Endothelial cell of umbilical vein (primary cell): ENCODE measurements at regions of chr2 and their contacts with region 1.

Region 1: GRCh38 chr2:176653479-176654443 is 384.5 kb downstream of the MTX2 start:
- DNase-seq: peak; percentile 86
- H3K4me3 ChIP-seq: no peak overlapping the region
- H3K27ac ChIP-seq: no peak overlapping the region
- H3K4me1 ChIP-seq: peaks cover 7% of the 10 kb centered on the region
- H3K27me3 ChIP-seq: peaks cover 0 to 8% of the 10 kb centered on the region in 2 experiments
- CTCF ChIP-seq: peak; percentile 69 to 76
- POLR2A ChIP-seq: no peak

Region 2: GRCh38 chr2:176110975-176111663 is 542.6 kb before region 1 on chr2:
- CTCF ChIA-PET with region 1: interaction called, 22 read pairs
- POLR2A ChIA-PET with region 1: no interaction called
- dilution Hi-C with region 1: no loop called
- intact Hi-C with region 1: loop called (anchors 1 kb)
- DNase-seq: peak; percentile 74
- H3K4me3 ChIP-seq: no peak overlapping the region
- H3K27ac ChIP-seq: no peak overlapping the region
- H3K4me1 ChIP-seq: no peaks in the 10 kb centered on the region
- H3K27me3 ChIP-seq: peaks cover 81 to 96% of the 10 kb centered on the region in 2 experiments
- CTCF ChIP-seq: peak; percentile 87 to 93
- POLR2A ChIP-seq: no peak

Region 3: DNA sequence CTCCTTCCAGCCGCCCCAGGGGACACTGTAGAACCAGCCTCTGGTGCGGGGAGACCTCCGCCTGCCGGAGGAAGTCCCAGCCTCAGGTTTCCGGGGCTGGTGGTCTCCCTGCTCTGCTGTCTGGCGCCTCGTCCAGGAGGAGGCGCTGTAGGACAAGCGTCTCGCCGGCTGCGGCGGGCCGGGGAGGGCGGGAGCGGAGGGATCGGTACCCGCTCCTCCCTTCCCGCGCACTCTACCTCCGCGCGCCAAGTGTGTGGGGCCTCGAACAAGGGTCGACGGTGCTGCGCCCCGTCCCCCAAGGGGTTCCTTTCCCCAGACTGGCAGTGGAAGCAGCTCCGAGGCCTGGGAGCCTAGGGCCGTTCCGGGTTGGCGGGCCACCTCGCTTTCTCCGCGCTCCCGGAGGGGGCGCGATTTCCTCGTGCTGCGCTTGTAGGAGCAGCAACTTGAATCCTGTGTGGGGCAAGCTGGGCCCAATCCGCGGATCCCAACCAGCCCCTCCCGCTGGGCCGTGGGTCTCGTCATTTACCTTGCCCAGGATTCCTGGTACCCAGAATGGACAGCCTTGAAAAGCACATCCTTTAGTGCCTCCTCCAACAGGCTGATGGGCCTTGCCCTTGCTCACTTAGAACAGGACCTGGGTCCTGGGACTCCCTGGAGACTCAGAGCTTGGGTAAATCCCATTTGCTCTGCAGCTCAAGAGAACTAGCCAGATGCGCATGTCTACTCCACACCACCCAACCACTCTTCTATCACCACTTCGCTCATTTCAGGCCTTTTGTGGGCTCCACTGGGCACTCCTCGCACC is 513.0 kb before region 1 on chr2:
- CTCF ChIA-PET with region 1: interaction called, 102 read pairs
- POLR2A ChIA-PET with region 1: interaction called, 5 read pairs
- dilution Hi-C with region 1: loop called (anchors 25 kb)
- intact Hi-C with region 1: loop called (anchors 1 kb)
- DNase-seq: peak; percentile 82
- H3K4me3 ChIP-seq: peak overlapping the region; percentile 16 to 51 (median 39)
- H3K27ac ChIP-seq: peak overlapping the region; percentile 56
- H3K4me1 ChIP-seq: peaks cover 30% of the 10 kb centered on the region
- H3K27me3 ChIP-seq: no peaks in the 10 kb centered on the region
- CTCF ChIP-seq: peak; percentile 80 to 83
- POLR2A ChIP-seq: peak; percentile 58

Region 4: GRCh38 chr2:176643646-176644045 is 10.1 kb before region 1 on chr2:
- CTCF ChIA-PET with region 1: interaction called, 42 read pairs
- POLR2A ChIA-PET with region 1: no interaction called
- dilution Hi-C with region 1: no loop called
- intact Hi-C with region 1: loop called (anchors 1 kb)
- DNase-seq: peak; percentile 39
- H3K4me3 ChIP-seq: no peak overlapping the region
- H3K27ac ChIP-seq: no peak overlapping the region
- H3K4me1 ChIP-seq: peaks cover 10% of the 10 kb centered on the region
- H3K27me3 ChIP-seq: no peaks in the 10 kb centered on the region
- CTCF ChIP-seq: no peak
- POLR2A ChIP-seq: no peak

Region 5: GRCh38 chr2:176814306-176815052 is 160.7 kb after region 1 on chr2:
- CTCF ChIA-PET with region 1: interaction called, 74 read pairs
- POLR2A ChIA-PET with region 1: no interaction called
- dilution Hi-C with region 1: no loop called
- intact Hi-C with region 1: loop called (anchors 1 kb)
- DNase-seq: peak; percentile 38
- H3K4me3 ChIP-seq: no peak overlapping the region
- H3K27ac ChIP-seq: no peak overlapping the region
- H3K4me1 ChIP-seq: no peaks in the 10 kb centered on the region
- H3K27me3 ChIP-seq: peaks cover 0 to 9% of the 10 kb centered on the region in 2 experiments
- CTCF ChIP-seq: peak; percentile 16 to 17
- POLR2A ChIP-seq: no peak

Region 6: DNA sequence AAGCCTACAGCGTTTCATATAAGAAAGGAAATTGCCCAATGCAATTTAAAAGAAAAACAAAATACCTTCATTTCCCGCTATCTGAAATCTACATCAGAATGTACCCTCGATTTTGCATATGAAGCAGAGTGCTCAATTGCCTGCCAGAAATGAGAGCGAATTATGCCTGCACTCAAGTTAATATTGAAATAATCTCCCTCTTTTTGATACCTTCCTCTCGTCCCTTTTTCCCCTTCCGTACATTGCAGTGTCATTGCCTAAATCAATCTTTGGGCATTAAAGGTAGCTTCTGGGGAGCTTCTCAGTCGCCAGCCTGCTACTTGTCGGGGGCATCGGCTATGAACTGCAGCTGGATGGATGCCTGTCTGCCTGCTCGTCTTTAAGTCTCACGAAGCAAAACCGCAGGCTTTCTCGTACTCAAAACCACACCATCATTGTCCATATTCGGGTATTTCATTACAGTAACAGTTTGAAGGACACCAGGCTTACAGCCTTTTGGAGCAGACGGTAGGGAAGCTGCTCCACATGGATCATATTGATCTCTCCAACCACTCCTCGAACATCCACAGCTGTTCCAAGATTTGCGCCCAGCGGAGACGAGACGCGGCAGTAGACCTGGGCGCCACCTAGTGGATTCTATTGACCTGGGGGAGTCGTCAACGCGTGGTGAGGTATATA is 494.9 kb after region 1 on chr2:
- CTCF ChIA-PET with region 1: interaction called, 31 read pairs
- POLR2A ChIA-PET with region 1: no interaction called
- dilution Hi-C with region 1: loop called (anchors 25 kb)
- intact Hi-C with region 1: loop called (anchors 1 kb)
- DNase-seq: peak; percentile 85
- H3K4me3 ChIP-seq: peak overlapping the region in 2 of 3 experiments; percentile 29 to 62
- H3K27ac ChIP-seq: no peak overlapping the region
- H3K4me1 ChIP-seq: peaks cover 10% of the 10 kb centered on the region
- H3K27me3 ChIP-seq: peaks cover 9% of the 10 kb centered on the region in 2 experiments
- CTCF ChIP-seq: peak; percentile 87 to 89
- POLR2A ChIP-seq: no peak